Activated CD8-positive, alpha-beta T cell treated with anti-CD3 and anti-CD28 coated beads for 36 hours (primary cell): ENCODE measurements at regions of chr6 and their contacts with region 1.

Region 1: GRCh38 chr6:97497713-97498331 is 214.8 kb upstream of the MMS22L start:
- DNase-seq: peak; percentile 69
- ATAC-seq: peak; percentile 93
- H3K4me3 Mint-ChIP-seq: no peak overlapping the region
- H3K27ac Mint-ChIP-seq: no peak overlapping the region
- H3K4me1 Mint-ChIP-seq: no peaks in the 10 kb centered on the region
- H3K27me3 Mint-ChIP-seq: peaks cover 13% of the 10 kb centered on the region
- CTCF ChIP-seq: peak; percentile 94

Region 2: DNA sequence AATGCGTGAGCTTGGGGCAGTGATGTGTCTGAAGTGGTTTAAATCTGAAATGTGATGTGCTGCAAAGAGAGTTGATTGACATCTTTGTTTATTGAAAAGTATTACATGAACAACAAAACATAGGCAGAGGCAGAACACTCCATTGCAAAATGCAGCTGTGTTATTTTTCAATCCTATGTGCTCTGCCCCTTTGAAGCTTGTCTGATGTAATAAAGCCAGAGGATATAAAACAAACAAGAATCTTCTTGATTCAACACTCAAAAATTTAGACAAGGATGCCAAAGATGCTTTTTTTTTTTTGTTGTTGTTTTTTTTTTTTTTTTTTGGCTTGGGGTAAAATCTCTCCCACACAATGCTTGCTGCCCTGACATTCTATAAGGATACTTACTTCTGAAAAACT is 267.7 kb after region 1 on chr6:
- CTCF ChIA-PET with region 1: no interaction called
- POLR2A ChIA-PET with region 1: no interaction called
- intact Hi-C with region 1: no loop called
- DNase-seq: no peak
- ATAC-seq: no peak
- H3K4me3 Mint-ChIP-seq: no peak overlapping the region
- H3K27ac Mint-ChIP-seq: no peak overlapping the region
- H3K4me1 Mint-ChIP-seq: no peaks in the 10 kb centered on the region
- H3K27me3 Mint-ChIP-seq: no peaks in the 10 kb centered on the region
- CTCF ChIP-seq: no peak

Region 3: DNA sequence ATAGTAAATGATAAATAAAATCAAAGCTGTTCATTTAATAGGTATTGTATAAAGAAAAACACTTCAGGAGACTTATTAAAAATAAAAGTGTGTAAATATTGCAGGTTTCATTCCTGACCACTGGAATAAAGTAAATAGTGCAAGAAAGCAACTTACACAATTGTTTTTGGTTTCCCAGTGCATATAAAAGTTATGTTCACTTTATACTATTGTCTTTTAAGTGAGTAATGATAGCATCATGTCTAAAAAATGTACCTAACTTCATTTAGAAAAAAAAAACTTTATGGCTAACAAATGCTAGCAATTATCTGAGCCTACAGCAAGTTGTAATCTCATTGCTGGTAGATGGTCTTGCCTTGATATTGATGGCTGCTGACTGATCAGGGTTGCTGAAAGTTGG is 610.0 kb after region 1 on chr6:
- CTCF ChIA-PET with region 1: no interaction called
- POLR2A ChIA-PET with region 1: no interaction called
- intact Hi-C with region 1: loop called (anchors 5 kb)
- DNase-seq: no peak
- ATAC-seq: no peak
- H3K4me3 Mint-ChIP-seq: no peak overlapping the region
- H3K27ac Mint-ChIP-seq: no peak overlapping the region
- H3K4me1 Mint-ChIP-seq: no peaks in the 10 kb centered on the region
- H3K27me3 Mint-ChIP-seq: no peaks in the 10 kb centered on the region
- CTCF ChIP-seq: no peak

Region 4: GRCh38 chr6:98845211-98846020 is 1347.6 kb after region 1 on chr6:
- CTCF ChIA-PET with region 1: interaction called, 12 read pairs
- POLR2A ChIA-PET with region 1: no interaction called
- intact Hi-C with region 1: loop called (anchors 1 kb)
- DNase-seq: peak; percentile 74
- ATAC-seq: peak; percentile 76
- H3K4me3 Mint-ChIP-seq: no peak overlapping the region
- H3K27ac Mint-ChIP-seq: no peak overlapping the region
- H3K4me1 Mint-ChIP-seq: peaks cover 10% of the 10 kb centered on the region
- H3K27me3 Mint-ChIP-seq: peaks cover 77% of the 10 kb centered on the region
- CTCF ChIP-seq: peak; percentile 89